A549 (cell line): ENCODE measurements at regions of chrX and their contacts with region 1.

Region 1: GRCh38 chrX:107716816-107717700 is 58.5 kb downstream of the TSC22D3 start:
- DNase-seq: peak; percentile 71 to 88
- ATAC-seq: peak; percentile 81 to 83
- H3K4me3 ChIP-seq: peak overlapping the region; percentile 84
- H3K27ac ChIP-seq: peak overlapping the region; percentile 89
- H3K4me1 ChIP-seq: peaks cover 37% of the 10 kb centered on the region
- CTCF ChIP-seq: no peak
- EP300 ChIP-seq: no peak
- POLR2A ChIP-seq: peak; percentile 76
- RAD21 ChIP-seq: no peak

Region 2: DNA sequence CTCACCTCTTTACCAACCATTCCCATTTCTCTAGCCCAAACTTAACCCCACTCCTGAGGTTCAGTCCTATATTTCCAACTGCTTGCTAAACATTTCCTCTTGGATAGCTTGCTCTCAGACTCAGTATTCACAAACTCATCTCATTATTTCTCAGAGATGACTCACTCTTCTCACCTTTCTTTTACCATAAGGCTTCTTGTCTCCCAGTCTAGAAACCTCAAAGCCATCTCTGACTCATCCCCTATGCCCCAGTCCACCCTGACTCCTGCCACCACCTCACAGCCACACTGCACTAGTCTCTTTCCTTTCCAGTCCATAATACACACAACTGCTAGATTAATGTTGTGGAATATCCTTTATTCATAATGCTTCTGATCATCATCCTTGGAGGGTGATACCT is 262.8 kb before region 1 on chrX:
- CTCF ChIA-PET with region 1: no interaction called
- POLR2A ChIA-PET with region 1: no interaction called
- DNase-seq: peak in 1 of 2 experiments; percentile 11
- ATAC-seq: 0 out of 6 replicates have a peak, but pooled peaks of 1 of the 2 experiments have one; percentile 25
- H3K4me3 ChIP-seq: no peak overlapping the region
- H3K27ac ChIP-seq: no peak overlapping the region
- H3K4me1 ChIP-seq: 0 out of 3 replicates have a peak, but pooled peaks cover 4% of the 10 kb centered on the region
- CTCF ChIP-seq: no peak
- EP300 ChIP-seq: no peak
- POLR2A ChIP-seq: no peak
- RAD21 ChIP-seq: no peak

Region 3: DNA sequence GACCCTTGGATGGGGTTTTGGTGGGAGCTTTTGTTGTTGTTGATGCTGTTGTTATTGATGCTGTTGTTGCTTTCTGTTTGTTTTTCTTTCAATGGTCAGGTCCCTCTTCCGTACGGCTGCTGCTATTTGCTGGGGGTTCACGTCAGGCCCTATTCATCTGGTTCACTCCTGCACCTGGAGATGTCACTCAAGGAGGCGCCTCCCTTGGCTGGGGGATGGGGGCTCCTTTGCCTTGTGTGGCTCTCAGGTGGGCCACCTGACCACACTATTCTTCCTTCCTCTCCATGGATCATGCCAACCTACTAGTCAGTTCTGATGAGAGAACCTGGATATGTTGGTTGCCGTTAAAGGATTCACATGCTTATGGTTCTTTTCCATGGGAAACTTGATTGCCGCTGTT is 127.8 kb before region 1 on chrX:
- CTCF ChIA-PET with region 1: no interaction called
- POLR2A ChIA-PET with region 1: no interaction called
- DNase-seq: no peak
- ATAC-seq: no peak
- H3K4me3 ChIP-seq: no peak overlapping the region
- H3K27ac ChIP-seq: no peak overlapping the region
- H3K4me1 ChIP-seq: no peaks in the 10 kb centered on the region
- CTCF ChIP-seq: no peak
- EP300 ChIP-seq: no peak
- POLR2A ChIP-seq: no peak
- RAD21 ChIP-seq: no peak

Region 4: GRCh38 chrX:107654872-107655761 is 61.9 kb before region 1 on chrX:
- CTCF ChIA-PET with region 1: interaction called, 54 read pairs
- POLR2A ChIA-PET with region 1: no interaction called
- DNase-seq: peak in 1 of 2 experiments; percentile 59
- ATAC-seq: peak; percentile 79 to 81
- H3K4me3 ChIP-seq: no peak overlapping the region
- H3K27ac ChIP-seq: no peak overlapping the region
- H3K4me1 ChIP-seq: peaks cover 12% of the 10 kb centered on the region; the same call in 2 of the 3 replicates
- CTCF ChIP-seq: peak; percentile 52; the same call in 2 of the 3 replicates
- EP300 ChIP-seq: no peak
- POLR2A ChIP-seq: no peak
- RAD21 ChIP-seq: peak in 1 of 2 experiments; percentile 8; a peak in 1 of 5 replicates

Region 5: GRCh38 chrX:107731831-107732502 is 14.9 kb after region 1 on chrX:
- CTCF ChIA-PET with region 1: interaction called, 10 read pairs
- POLR2A ChIA-PET with region 1: interaction called, 26 read pairs
- DNase-seq: peak; percentile 33 to 83
- ATAC-seq: peak; percentile 85 to 89
- H3K4me3 ChIP-seq: no peak overlapping the region
- H3K27ac ChIP-seq: peak overlapping the region; percentile 80
- H3K4me1 ChIP-seq: peaks cover 53% of the 10 kb centered on the region
- CTCF ChIP-seq: no peak
- EP300 ChIP-seq: peak in 1 of 2 experiments; percentile 25; a peak in 1 of 5 replicates
- POLR2A ChIP-seq: no peak
- RAD21 ChIP-seq: no peak

Region 6: DNA sequence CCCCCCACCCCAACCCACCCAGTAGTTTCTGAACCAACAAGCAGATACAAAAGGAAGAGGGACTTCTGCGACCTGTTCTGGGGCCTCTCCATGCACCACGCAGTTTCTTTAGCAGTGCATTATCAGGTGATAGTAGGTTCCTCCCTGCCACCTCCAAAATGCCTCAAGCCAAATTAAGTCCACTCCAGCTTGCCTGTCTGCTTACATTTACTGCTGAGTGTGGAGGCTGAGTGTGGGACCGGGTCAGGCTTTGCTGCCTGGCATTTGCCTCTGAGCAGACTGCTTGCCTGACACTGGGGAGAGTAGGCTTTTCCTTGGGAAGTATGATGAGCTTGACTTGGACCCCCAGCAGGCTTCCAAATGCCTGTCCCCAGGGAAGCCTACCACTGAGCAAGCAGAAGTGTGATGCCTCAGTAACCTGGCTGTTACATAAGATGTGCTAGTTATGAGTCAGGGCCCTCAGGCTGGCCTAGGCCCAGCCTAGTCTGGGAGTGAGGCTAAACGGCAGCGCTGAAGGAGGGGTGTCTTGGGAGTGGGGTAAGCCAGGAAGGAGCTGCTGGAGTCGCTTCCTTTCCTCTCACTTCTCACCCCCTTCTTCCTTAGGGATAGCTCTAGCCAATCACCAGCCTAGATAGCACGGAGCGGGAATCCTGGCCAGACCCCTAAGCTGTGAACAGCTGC is 49.6 kb after region 1 on chrX:
- CTCF ChIA-PET with region 1: interaction called, 10 read pairs
- POLR2A ChIA-PET with region 1: no interaction called
- DNase-seq: no peak
- ATAC-seq: peak; percentile 57 to 81
- H3K4me3 ChIP-seq: no peak overlapping the region
- H3K27ac ChIP-seq: no peak overlapping the region
- H3K4me1 ChIP-seq: peaks cover 9% of the 10 kb centered on the region
- CTCF ChIP-seq: no peak
- EP300 ChIP-seq: no peak
- POLR2A ChIP-seq: no peak
- RAD21 ChIP-seq: no peak